ENCODE measurements at regions of chr14 and their contacts with region 1.

Region 1: GRCh38 chr14:55339770-55340169 is 68.5 kb downstream of the FBXO34 start:
- DNase-seq: peak in 1 of 2 experiments; percentile 7
- H3K4me3 ChIP-seq: no peak overlapping the region
- H3K4me3 Mint-ChIP-seq: no peak overlapping the region
- H3K27ac Mint-ChIP-seq: no peak overlapping the region
- H3K4me1 ChIP-seq: peaks cover 15% of the 10 kb centered on the region
- H3K4me1 Mint-ChIP-seq: peaks cover 21% of the 10 kb centered on the region
- H3K27me3 ChIP-seq: no peaks in the 10 kb centered on the region
- H3K27me3 Mint-ChIP-seq: no peaks in the 10 kb centered on the region
- CTCF ChIP-seq: no peak

Region 2: GRCh38 chr14:55277972-55278740 is 61.6 kb before region 1 on chr14:
- CTCF ChIA-PET with region 1: no interaction called
- POLR2A ChIA-PET with region 1: interaction called, 15 read pairs
- intact Hi-C with region 1: no loop called
- DNase-seq: no peak
- H3K4me3 ChIP-seq: no peak overlapping the region
- H3K4me3 Mint-ChIP-seq: no peak overlapping the region
- H3K27ac Mint-ChIP-seq: no peak overlapping the region
- H3K4me1 ChIP-seq: peaks cover 34% of the 10 kb centered on the region
- H3K4me1 Mint-ChIP-seq: peaks cover 38% of the 10 kb centered on the region
- H3K27me3 ChIP-seq: no peaks in the 10 kb centered on the region
- H3K27me3 Mint-ChIP-seq: no peaks in the 10 kb centered on the region
- CTCF ChIP-seq: no peak

Measured in Caco-2 (cell line).